ENCODE measurements at regions of chr19 and their contacts with region 1.

Region 1: DNA sequence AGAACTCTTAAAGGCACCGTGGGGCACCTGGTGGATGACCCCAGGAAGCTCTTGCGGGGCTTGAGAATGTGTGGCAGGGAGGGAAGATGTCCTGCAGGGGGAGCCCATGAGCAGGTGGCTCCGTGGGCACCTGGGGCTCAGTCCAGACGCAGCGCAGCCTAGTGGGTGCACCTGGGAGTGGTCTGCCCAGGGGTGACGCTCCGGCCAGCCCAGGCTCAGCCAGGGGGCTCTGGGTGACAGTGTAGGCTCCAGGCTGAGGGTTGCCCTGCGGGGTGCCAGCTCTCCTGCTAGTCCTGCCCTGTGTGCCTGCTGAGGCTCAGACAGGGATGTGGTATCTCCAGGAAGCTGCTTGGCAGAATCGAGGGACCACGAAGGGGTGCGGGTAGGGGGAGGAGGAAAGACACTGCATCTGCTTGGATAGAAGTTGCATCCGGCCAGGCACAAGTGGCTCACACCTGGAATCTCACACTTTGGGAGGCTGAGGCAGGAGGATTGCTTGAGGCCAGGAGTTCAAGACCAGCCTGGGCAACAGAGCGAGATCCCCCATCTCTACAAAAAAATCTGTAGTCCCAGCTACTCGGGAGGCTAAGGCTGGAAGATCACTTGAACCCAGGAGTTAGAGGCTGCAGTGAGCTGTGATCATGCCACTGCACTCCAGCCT is 15.0 kb upstream of the PGLS start:
- DNase-seq: peak; percentile 90
- CTCF ChIP-seq: peak; percentile 96

Region 2: GRCh38 chr19:17419621-17420466 is 76.6 kb before region 1 on chr19 and contains the start of gene MVB12A:
- CTCF ChIA-PET with region 1: interaction called, 11 read pairs
- POLR2A ChIA-PET with region 1: no interaction called
- DNase-seq: peak; percentile 99
- CTCF ChIP-seq: no peak

Region 3: DNA sequence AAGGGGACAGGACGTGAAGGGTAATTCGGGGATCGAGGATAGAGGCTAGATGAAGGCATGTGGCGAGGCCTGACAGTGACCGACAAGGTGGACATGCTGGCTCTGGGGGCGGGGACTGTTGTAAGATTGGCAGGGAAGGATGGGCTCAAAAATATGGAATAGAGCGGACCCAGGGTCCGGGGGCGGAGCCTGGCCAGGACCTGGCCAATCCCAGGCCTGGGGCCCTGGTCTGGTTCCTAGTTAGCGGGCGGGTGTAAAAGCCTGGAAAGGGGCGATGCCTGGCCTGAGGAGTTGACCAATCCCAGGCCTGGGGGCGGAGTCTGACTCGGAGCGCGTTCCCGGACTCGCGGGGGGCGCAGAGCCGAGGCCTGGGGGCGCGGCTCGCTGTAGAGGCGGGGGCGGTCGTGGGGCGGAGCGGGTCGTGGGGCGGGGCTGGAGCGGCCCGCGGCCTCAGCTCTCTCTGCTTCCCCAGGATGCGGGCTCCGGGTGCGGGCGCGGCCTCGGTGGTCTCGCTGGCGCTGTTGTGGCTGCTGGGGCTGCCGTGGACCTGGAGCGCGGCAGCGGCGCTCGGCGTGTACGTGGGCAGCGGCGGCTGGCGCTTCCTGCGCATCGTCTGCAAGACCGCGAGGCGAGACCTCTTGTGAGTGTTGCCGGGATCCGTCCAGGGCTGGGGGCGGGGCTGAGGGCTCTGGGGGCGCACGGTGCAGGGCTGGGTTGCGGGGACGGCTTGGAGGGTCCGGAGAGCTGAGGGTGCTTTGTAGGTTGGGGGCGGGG is 26.2 kb before region 1 on chr19 and contains the start of gene SLC27A1:
- CTCF ChIA-PET with region 1: interaction called, 31 read pairs
- POLR2A ChIA-PET with region 1: no interaction called
- DNase-seq: peak; percentile 93
- CTCF ChIP-seq: no peak

Region 4: DNA sequence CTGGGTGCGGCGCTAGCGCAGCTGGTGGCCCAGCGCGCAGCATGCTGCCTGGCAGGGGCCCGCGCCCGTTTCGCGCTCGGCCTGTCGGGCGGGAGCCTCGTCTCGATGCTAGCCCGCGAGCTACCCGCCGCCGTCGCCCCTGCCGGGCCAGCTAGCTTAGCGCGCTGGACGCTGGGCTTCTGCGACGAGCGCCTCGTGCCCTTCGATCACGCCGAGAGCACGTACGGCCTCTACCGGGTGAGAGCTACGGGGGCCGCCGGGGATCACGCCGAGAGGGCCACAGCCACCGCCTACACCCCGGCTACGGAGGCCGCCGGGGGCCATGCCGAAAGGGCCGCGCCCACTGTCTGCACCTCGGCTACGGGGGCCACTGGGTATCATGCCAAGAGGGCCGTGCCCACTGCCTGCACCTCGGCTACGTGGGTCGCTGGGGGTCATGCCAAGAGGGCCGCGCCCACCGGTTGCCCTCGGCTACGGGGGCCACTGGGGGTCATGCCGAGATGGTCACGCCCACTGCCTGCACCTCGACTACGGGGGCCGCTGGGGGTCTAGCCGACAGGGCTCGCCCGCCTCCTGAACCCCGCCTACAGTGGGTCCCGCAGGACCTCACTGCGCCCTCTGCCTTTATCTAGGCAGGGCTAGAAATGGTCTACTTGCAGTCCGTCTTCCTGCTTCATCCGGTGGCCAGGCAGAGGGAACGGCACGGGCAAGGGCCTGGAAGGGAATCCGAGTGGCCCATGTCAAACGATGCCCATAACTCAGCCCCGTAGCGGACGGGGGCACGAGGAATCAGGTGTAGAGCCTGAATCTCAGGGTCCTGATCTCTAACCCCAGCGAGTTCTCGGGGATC is 15.5 kb after region 1 on chr19:
- CTCF ChIA-PET with region 1: interaction called, 87 read pairs
- POLR2A ChIA-PET with region 1: no interaction called
- DNase-seq: peak; percentile 90
- CTCF ChIP-seq: peak; percentile 61

Region 5: DNA sequence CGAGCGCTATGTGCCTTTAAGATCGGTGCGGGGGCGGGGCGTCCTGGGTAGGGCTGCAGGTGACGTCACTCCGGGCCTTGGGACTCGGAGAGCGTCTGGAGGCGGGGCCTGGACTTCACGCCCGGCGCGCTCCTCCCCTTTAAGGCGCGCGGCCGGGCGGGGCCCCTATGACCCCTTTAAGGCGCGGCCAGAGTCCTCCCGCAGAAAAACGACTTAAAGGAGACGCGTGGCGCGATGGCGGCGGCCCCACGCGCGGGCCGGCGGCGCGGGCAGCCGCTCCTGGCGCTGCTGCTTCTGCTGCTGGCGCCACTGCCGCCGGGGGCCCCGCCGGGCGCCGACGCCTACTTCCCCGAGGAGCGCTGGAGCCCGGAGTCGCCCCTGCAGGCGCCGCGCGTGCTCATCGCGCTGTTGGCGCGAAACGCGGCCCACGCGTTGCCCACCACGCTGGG is 59.0 kb after region 1 on chr19 and contains the start of gene COLGALT1:
- CTCF ChIA-PET with region 1: interaction called, 11 read pairs
- POLR2A ChIA-PET with region 1: no interaction called
- DNase-seq: peak; percentile 99
- CTCF ChIP-seq: no peak

Region 6: GRCh38 chr19:17605761-17606745 is 109.6 kb after region 1 on chr19:
- CTCF ChIA-PET with region 1: interaction called, 23 read pairs
- POLR2A ChIA-PET with region 1: no interaction called
- DNase-seq: peak; percentile 96
- CTCF ChIP-seq: peak; percentile 42

Region 7: GRCh38 chr19:17859533-17860330 is 363.3 kb after region 1 on chr19 and contains the start of gene RPL18A:
- CTCF ChIA-PET with region 1: interaction called, 25 read pairs
- POLR2A ChIA-PET with region 1: no interaction called
- DNase-seq: peak; percentile 98
- CTCF ChIP-seq: peak; percentile 83